Naive thymus-derived CD4-positive, alpha-beta T cell (primary cell): ENCODE measurements at regions of chr6 and their contacts with region 1.

Region 1: GRCh38 chr6:57316581-57317059 is 810 bp upstream of the PRIM2 start:
- DNase-seq: peak; percentile 63 to 87 (median 83)
- ATAC-seq: peak; percentile 92
- H3K4me3 ChIP-seq: peak overlapping the region; percentile 84
- H3K4me3 Mint-ChIP-seq: peak overlapping the region; percentile 90 to 100 (median 97)
- H3K27ac ChIP-seq: peak overlapping the region; percentile 66
- H3K27ac Mint-ChIP-seq: peak overlapping the region; percentile 87 to 98 (median 93)
- H3K4me1 ChIP-seq: peaks cover 0 to 9% of the 10 kb centered on the region in 2 donors
- H3K4me1 Mint-ChIP-seq: peaks cover 21 to 38% (median 33%) of the 10 kb centered on the region in 7 donors
- H3K27me3 ChIP-seq: no peaks in the 10 kb centered on the region
- H3K27me3 Mint-ChIP-seq: peaks cover 0 to 6% (median 0%) of the 10 kb centered on the region in 5 donors

Region 2: DNA sequence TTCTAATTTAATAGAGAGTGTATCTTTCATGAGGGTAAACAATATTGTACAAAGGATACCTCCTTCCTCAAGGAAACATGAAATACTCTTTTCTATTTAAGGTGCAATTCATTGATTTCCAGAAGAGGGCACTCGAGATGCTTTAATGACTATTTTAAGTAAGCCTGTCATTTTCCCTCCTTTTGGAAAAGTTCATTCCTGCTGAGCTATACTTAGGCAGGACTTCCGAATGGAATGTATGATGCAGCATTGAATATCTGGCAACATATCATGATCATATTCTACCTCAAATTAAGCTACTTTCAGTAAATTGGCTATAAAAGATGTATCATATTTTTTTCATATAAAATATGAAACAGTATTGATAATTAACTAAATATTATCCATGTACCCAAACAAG is 679.0 kb before region 1 on chr6:
- CTCF ChIA-PET with region 1: no interaction called
- POLR2A ChIA-PET with region 1: no interaction called
- intact Hi-C with region 1: loop called (anchors 1 to 5 kb)
- DNase-seq: peak in 1 of 9 donors; percentile 7
- ATAC-seq: no peak
- H3K4me3 ChIP-seq: no peak overlapping the region
- H3K4me3 Mint-ChIP-seq: no peak overlapping the region
- H3K27ac ChIP-seq: no peak overlapping the region
- H3K27ac Mint-ChIP-seq: no peak overlapping the region
- H3K4me1 ChIP-seq: no peaks in the 10 kb centered on the region
- H3K4me1 Mint-ChIP-seq: no peaks in the 10 kb centered on the region
- H3K27me3 ChIP-seq: no peaks in the 10 kb centered on the region
- H3K27me3 Mint-ChIP-seq: peaks cover 2 to 13% (median 10%) of the 10 kb centered on the region in 5 donors

Region 3: DNA sequence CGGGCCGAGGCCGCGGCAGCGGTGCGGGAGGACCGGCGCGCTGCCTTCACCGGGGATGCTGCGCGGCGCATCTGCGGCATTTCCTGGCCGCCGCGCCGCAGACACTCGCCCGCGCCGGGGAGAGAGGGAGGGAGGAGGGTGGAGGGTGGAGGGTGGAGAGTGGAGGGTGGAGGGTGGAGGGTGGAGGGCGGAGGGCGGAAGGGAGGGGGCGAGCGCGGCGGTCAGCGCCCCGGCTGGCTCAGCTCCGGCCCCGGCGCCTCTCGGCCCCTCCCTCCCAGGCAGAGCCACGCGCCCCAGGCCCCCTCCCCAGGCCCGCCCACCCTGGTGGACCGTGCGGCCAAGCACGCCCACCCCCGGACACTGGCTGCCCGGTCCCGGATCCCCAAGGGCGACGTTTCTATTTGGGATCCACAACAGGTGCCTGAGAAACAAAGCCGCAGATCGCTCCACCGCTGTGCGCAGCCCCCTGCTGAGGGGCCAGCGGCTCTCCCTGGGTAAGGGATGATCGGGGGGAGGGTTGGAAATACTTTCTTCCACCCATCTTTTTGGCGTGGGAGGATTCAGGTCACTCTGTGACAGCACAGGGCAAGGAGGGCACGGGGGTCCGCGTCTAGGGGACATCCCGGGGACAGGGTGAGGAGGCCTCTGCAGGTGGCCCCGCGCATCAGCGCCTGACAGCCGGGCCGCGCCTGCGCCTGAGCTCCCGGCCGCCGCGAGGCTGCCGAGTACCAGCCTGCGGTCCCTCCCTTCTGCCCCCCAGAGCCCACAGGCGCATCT is 472.9 kb before region 1 on chr6:
- CTCF ChIA-PET with region 1: no interaction called
- POLR2A ChIA-PET with region 1: no interaction called
- intact Hi-C with region 1: loop called in 1 of 2 experiments (anchors 5 kb)
- DNase-seq: peak; percentile 34 to 77 (median 57)
- ATAC-seq: peak; percentile 92
- H3K4me3 ChIP-seq: peak overlapping the region; percentile 45
- H3K4me3 Mint-ChIP-seq: peak overlapping the region; percentile 55 to 83 (median 78)
- H3K27ac ChIP-seq: no peak overlapping the region
- H3K27ac Mint-ChIP-seq: peak overlapping the region in 2 of 9 donors; percentile 14 to 45
- H3K4me1 ChIP-seq: peaks cover 0 to 7% of the 10 kb centered on the region in 2 donors
- H3K4me1 Mint-ChIP-seq: peaks cover 6 to 20% (median 11%) of the 10 kb centered on the region in 7 donors
- H3K27me3 ChIP-seq: no peaks in the 10 kb centered on the region
- H3K27me3 Mint-ChIP-seq: peaks cover 39 to 66% (median 57%) of the 10 kb centered on the region in 5 donors

Region 4: GRCh38 chr6:56955171-56956045 is 361.2 kb before region 1 on chr6:
- CTCF ChIA-PET with region 1: no interaction called
- POLR2A ChIA-PET with region 1: no interaction called
- intact Hi-C with region 1: loop called (anchors 1 kb)
- DNase-seq: peak in 7 of 9 donors; percentile 8 to 81 (median 19)
- ATAC-seq: peak; percentile 74
- H3K4me3 ChIP-seq: peak overlapping the region; percentile 37
- H3K4me3 Mint-ChIP-seq: peak overlapping the region; percentile 76 to 88 (median 80)
- H3K27ac ChIP-seq: no peak overlapping the region
- H3K27ac Mint-ChIP-seq: peak overlapping the region in 1 of 9 donors; percentile 30
- H3K4me1 ChIP-seq: peaks cover 6 to 16% of the 10 kb centered on the region in 2 donors
- H3K4me1 Mint-ChIP-seq: peaks cover 11 to 26% (median 24%) of the 10 kb centered on the region in 7 donors
- H3K27me3 ChIP-seq: peaks cover 0 to 12% of the 10 kb centered on the region in 2 donors
- H3K27me3 Mint-ChIP-seq: peaks cover 52 to 77% (median 69%) of the 10 kb centered on the region in 5 donors

Region 5: DNA sequence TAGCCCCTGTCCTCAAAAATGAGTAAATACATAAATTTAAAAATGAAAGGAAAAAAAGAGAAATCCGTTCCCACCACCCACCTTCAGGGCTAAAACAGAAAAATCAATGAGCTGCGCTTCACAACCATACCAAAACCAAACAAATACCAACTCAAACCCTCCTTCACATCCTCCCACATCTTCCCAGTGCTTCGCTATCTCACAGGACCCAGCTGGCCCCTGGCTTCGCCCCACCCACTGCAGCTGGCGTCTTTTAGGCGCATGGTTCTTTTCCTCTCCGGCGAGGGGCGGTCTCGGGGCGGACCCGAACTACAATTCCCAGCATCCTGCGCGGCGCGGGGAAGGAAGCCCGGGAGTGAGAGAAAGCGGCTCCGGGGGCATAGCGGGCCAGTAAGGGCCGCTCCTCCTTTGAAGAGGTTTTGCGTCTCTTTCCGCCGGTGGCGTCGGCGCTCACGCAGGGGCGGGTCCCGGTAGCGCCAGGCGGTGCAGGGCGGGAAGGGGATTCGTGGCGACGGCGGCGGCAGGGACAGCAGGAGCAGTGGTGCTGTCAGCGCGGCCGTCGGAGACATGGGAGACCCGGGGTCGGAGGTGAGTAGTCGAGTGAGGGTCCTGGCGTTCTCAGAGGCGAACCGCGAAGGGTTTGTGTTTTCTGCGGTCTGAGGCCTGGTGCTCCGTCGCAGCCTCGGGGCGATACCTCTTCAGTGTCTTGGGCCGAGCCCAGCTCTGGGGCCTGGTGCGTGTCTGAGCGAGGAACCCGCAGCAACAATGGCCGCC is 226.7 kb before region 1 on chr6 and contains the start of gene ZNF451:
- CTCF ChIA-PET with region 1: no interaction called
- POLR2A ChIA-PET with region 1: no interaction called
- intact Hi-C with region 1: loop called in 1 of 2 experiments (anchors 1 kb)
- DNase-seq: peak; percentile 88 to 97 (median 94)
- ATAC-seq: peak; percentile 96
- H3K4me3 ChIP-seq: peak within 1 kb of the TSS; percentile 64
- H3K4me3 Mint-ChIP-seq: peak within 1 kb of the TSS; percentile 85 to 94 (median 90)
- H3K27ac ChIP-seq: peak within 1 kb of the TSS; percentile 78
- H3K27ac Mint-ChIP-seq: peak within 1 kb of the TSS; percentile 79 to 94 (median 90)
- H3K4me1 ChIP-seq: peaks cover 24% of the 10 kb centered on the region in 2 donors
- H3K4me1 Mint-ChIP-seq: peaks cover 22 to 44% (median 34%) of the 10 kb centered on the region in 7 donors
- H3K27me3 ChIP-seq: no peaks in the 10 kb centered on the region
- H3K27me3 Mint-ChIP-seq: no peaks in the 10 kb centered on the region
- total RNA-seq, gene ZNF451: 63.4 to 116 (median 96.6) TPM

Region 6: DNA sequence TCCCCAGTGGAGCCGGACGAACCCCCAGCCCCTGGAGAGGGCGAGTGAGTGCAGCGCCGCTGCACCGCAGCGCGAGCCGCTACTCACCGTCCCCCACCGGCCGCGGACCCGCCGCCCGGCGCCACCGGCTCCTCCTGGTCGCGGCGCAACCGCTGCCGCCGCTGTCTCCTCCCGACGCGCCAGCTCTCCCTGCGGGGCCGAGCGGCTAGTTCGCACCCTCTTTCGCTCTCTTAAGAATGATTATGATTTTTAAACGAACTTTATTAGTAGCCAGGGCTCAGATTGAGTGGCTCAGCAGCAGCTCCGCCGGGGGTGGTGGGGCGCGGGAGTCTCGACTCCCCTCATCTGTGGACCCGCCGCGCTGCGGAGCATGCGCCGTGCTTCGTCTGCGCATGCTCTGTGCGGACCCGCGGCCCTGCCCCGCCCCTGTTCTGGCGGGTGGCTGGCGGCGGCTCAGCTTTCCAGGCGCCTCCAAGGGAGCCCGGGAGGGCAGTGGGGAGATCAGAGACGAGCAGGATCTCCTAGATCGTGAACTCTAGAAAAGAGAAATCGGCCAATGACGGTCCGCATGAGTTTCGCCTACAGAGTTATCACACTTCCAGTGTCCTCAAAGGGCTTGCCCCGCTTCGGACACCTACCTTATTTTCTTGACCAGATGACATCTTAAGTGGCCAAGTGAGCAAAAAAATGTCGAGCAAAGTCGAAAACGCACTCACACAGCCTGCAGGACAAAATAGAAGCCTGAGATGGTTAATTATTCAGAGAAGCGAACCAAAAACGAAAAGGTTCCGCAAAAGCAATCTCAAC is 94.5 kb before region 1 on chr6 and contains the start of gene RAB23:
- CTCF ChIA-PET with region 1: no interaction called
- POLR2A ChIA-PET with region 1: no interaction called
- intact Hi-C with region 1: loop called (anchors 1 kb)
- DNase-seq: peak; percentile 70 to 94 (median 87)
- ATAC-seq: peak; percentile 92
- H3K4me3 ChIP-seq: peak within 1 kb of the TSS; percentile 86
- H3K4me3 Mint-ChIP-seq: peak within 1 kb of the TSS; percentile 89 to 100 (median 98)
- H3K27ac ChIP-seq: peak within 1 kb of the TSS; percentile 68
- H3K27ac Mint-ChIP-seq: peak within 1 kb of the TSS; percentile 85 to 95 (median 91)
- H3K4me1 ChIP-seq: no peaks in the 10 kb centered on the region
- H3K4me1 Mint-ChIP-seq: peaks cover 0 to 24% (median 10%) of the 10 kb centered on the region in 7 donors
- H3K27me3 ChIP-seq: no peaks in the 10 kb centered on the region
- H3K27me3 Mint-ChIP-seq: peaks cover 6 to 43% (median 13%) of the 10 kb centered on the region in 5 donors
- total RNA-seq, gene RAB23: 0.50 to 3.2 (median 2.0) TPM